ENCODE measurements at regions of chr3 and their contacts with region 1.

Region 1: DNA sequence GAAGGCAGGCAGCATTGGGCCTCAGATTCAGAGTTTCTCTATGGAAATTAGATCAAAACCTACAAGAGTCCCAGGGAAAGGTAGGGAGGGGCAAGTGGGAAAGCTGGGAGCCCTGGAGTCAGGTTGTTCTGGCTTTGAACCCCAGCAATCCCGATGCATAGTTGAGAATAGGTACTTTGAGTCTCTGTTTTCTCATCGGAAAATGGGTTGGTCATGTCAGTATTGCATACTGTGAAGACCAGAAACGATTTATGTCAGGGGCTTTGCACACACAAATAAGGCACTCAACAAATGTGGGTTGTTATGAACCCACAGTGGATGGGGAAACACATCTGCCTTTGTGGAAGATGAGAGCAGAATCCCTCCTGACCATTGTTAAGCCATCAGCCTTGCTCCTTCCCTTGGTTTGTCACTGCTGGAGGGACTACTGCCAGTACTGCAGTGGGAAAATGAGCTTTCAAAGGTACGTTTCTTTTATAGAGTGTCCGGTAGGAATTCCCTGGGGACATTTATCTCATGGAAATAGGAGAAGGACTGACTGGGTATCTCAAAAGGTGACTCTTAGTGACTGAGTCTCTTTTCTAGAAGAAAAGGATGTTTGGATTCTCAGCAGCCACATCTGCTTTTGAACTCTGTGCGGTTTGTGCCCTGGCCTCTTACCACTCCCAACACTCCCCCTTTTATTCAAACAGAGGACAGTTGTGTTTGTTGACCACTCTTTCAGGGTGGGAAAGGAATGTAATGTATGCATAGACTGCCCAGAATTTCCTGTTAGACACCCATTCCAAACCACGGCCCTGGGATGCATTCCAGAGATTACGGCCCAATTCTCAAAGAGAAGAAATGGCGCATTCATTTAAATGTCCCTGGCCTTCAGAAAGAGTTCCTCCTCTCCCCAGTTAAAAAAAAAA is 54.6 kb upstream of the VILL start:
- DNase-seq: no peak
- H3K4me3 ChIP-seq: no peak overlapping the region
- H3K27ac ChIP-seq: no peak overlapping the region
- H3K4me1 ChIP-seq: peaks cover 15% of the 10 kb centered on the region
- H3K27me3 ChIP-seq: no peaks in the 10 kb centered on the region
- CTCF ChIP-seq: no peak
- EP300 ChIP-seq: no peak
- POLR2A ChIP-seq: no peak

Region 2: DNA sequence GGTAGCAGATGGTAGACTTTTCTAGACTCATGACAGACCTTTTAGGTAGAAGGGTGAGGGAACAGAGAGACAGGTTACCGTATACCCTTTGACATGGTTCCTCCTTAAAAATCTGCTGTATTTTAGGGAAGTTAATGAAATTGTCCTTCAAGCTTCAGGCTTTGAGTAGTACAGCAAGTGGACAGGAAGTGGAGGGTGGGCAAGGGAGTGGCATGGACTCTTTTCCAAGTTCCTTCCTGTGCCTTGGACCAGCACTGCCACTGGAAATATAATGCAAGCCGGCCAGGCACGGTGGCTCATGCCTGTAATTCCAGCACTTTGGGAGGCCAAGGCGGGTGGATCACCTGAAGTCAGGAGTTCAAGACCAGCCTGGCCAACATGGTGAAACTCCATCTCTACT is 605.5 kb before region 1 on chr3:
- intact Hi-C with region 1: loop called in 1 of 4 experiments (anchors 5 kb)
- DNase-seq: no peak
- H3K4me3 ChIP-seq: no peak overlapping the region
- H3K27ac ChIP-seq: no peak overlapping the region
- H3K4me1 ChIP-seq: no peaks in the 10 kb centered on the region
- H3K27me3 ChIP-seq: no peaks in the 10 kb centered on the region
- CTCF ChIP-seq: no peak
- EP300 ChIP-seq: no peak
- POLR2A ChIP-seq: no peak

Region 3: DNA sequence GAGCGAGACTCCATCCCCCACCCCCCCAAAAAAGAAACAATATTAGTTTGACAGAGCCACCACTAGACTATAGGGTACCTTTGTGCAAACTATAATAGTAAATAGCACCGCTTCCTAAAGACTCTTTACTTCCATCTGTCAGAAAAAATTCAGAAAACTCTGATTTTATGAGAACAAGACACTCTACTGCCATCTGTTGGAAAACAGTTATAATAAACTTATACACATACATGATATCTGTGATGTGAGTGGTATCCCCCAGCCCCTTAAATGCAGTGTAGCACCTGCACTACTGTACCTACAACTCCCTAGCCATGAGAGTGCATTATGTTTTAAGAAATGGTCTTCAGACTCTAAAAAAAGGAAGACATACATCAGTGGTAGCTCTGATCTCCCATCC is 121.5 kb before region 1 on chr3:
- intact Hi-C with region 1: no loop called
- DNase-seq: no peak
- H3K4me3 ChIP-seq: no peak overlapping the region
- H3K27ac ChIP-seq: no peak overlapping the region
- H3K4me1 ChIP-seq: peaks cover 14% of the 10 kb centered on the region
- H3K27me3 ChIP-seq: no peaks in the 10 kb centered on the region
- CTCF ChIP-seq: peak in 2 of 3 donors; percentile 7 to 8
- EP300 ChIP-seq: no peak
- POLR2A ChIP-seq: no peak

Region 4: GRCh38 chr3:37986479-37987314 is 50.7 kb after region 1 on chr3:
- intact Hi-C with region 1: no loop called
- DNase-seq: peak in 2 of 5 donors; percentile 9 to 10
- H3K4me3 ChIP-seq: no peak overlapping the region
- H3K27ac ChIP-seq: no peak overlapping the region
- H3K4me1 ChIP-seq: no peaks in the 10 kb centered on the region
- H3K27me3 ChIP-seq: no peaks in the 10 kb centered on the region
- CTCF ChIP-seq: no peak
- EP300 ChIP-seq: no peak
- POLR2A ChIP-seq: no peak

Measured in ovary (tissue), 10 donors.